ENCODE measurements at regions of chr3 and their contacts with region 1.

Region 1: DNA sequence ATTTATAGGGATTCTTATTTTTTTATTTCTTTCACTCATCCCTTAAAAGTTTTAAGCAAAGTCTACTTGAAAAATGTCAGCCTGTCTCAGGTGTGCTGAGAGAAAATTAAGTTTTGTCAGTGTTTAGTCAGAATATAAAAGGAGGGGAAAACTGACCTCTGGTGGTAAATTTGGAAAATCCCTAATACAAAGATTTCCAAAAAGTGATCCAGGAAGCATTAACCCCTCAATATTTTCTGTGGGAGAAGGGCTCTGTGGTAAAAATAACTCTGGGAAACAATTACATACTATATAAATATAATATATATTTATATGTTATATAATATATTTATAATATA is 41.0 kb upstream of the FRMD4B start:
- DNase-seq: no peak
- ATAC-seq: no peak
- H3K4me3 Mint-ChIP-seq: no peak overlapping the region
- H3K27ac Mint-ChIP-seq: no peak overlapping the region
- H3K4me1 Mint-ChIP-seq: peaks cover 4% of the 10 kb centered on the region
- H3K27me3 Mint-ChIP-seq: no peaks in the 10 kb centered on the region
- CTCF ChIP-seq: no peak

Region 2: GRCh38 chr3:69324362-69325025 is 102.4 kb before region 1 on chr3:
- CTCF ChIA-PET with region 1: interaction called, 11 read pairs
- POLR2A ChIA-PET with region 1: no interaction called
- DNase-seq: no peak
- ATAC-seq: peak; percentile 96
- H3K4me3 Mint-ChIP-seq: no peak overlapping the region
- H3K27ac Mint-ChIP-seq: no peak overlapping the region
- H3K4me1 Mint-ChIP-seq: peaks cover 18% of the 10 kb centered on the region
- H3K27me3 Mint-ChIP-seq: no peaks in the 10 kb centered on the region
- CTCF ChIP-seq: peak; percentile 35; the same call in 1 of the 2 replicates

Region 3: GRCh38 chr3:69353503-69353902 is 73.4 kb before region 1 on chr3:
- CTCF ChIA-PET with region 1: no interaction called
- POLR2A ChIA-PET with region 1: no interaction called
- DNase-seq: no peak
- ATAC-seq: no peak
- H3K4me3 Mint-ChIP-seq: no peak overlapping the region
- H3K27ac Mint-ChIP-seq: no peak overlapping the region
- H3K4me1 Mint-ChIP-seq: no peaks in the 10 kb centered on the region
- H3K27me3 Mint-ChIP-seq: no peaks in the 10 kb centered on the region
- CTCF ChIP-seq: no peak

Measured in WTC11 (cell line).